ENCODE measurements at regions of chr2 and their contacts with region 1.

Region 1: GRCh38 chr2:107936433-107937359 is 49.6 kb upstream of the SLC5A7 start:
- DNase-seq: peak; percentile 10
- ATAC-seq: no peak
- H3K4me3 ChIP-seq: no peak overlapping the region
- H3K27ac ChIP-seq: no peak overlapping the region
- H3K4me1 ChIP-seq: no peaks in the 10 kb centered on the region
- H3K27me3 ChIP-seq: peaks cover 0 to 13% of the 10 kb centered on the region in 2 experiments; a peak in 2 of 5 replicates
- CTCF ChIP-seq: peak; percentile 61
- EP300 ChIP-seq: no peak
- POLR2A ChIP-seq: no peak
- RAD21 ChIP-seq: no peak

Region 2: DNA sequence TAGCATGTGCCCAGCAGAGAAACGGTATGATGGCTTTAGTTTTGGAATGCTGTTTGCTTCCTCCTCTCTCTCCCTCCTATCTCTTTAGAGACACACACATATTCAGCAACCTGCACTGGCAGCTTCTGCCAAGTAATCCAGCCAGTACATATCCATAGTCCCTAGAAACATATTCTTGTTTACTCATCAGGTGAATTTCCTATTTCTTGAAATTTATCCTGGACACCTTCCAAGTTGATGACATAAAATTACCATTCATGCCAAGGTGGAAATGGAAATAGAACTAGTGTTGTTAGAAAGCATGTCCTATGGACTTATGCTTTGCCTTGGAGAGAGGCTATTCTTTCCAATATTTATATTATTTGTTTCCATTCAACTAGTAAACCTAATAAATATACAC is 160.9 kb before region 1 on chr2:
- CTCF ChIA-PET with region 1: no interaction called
- POLR2A ChIA-PET with region 1: no interaction called
- in situ Hi-C with region 1: loop called (anchors 25 kb)
- intact Hi-C with region 1: no loop called
- DNase-seq: no peak
- ATAC-seq: no peak
- H3K4me3 ChIP-seq: no peak overlapping the region
- H3K27ac ChIP-seq: no peak overlapping the region
- H3K4me1 ChIP-seq: no peaks in the 10 kb centered on the region
- H3K27me3 ChIP-seq: peaks cover 0 to 5% of the 10 kb centered on the region in 2 experiments; a peak in 1 of 5 replicates
- CTCF ChIP-seq: no peak
- EP300 ChIP-seq: no peak
- POLR2A ChIP-seq: no peak
- RAD21 ChIP-seq: no peak

Region 3: GRCh38 chr2:108184419-108184818 is 247.7 kb after region 1 on chr2:
- CTCF ChIA-PET with region 1: no interaction called
- POLR2A ChIA-PET with region 1: no interaction called
- in situ Hi-C with region 1: loop called (anchors 5 kb)
- intact Hi-C with region 1: loop called (anchors 2 kb)
- DNase-seq: peak; percentile 29
- ATAC-seq: peak; percentile 87
- H3K4me3 ChIP-seq: no peak overlapping the region
- H3K27ac ChIP-seq: no peak overlapping the region
- H3K4me1 ChIP-seq: no peaks in the 10 kb centered on the region
- H3K27me3 ChIP-seq: no peaks in the 10 kb centered on the region
- CTCF ChIP-seq: peak; percentile 60
- EP300 ChIP-seq: no peak
- POLR2A ChIP-seq: no peak
- RAD21 ChIP-seq: no peak